Activated CD8-positive, alpha-beta T cell treated with anti-CD3 and anti-CD28 coated beads, Interleukin-2, amount 10 ng/mL, durations not matched to agents 7 days and 5 days (primary cell): ENCODE measurements at regions of chr3 and their contacts with region 1.

Region 1: DNA sequence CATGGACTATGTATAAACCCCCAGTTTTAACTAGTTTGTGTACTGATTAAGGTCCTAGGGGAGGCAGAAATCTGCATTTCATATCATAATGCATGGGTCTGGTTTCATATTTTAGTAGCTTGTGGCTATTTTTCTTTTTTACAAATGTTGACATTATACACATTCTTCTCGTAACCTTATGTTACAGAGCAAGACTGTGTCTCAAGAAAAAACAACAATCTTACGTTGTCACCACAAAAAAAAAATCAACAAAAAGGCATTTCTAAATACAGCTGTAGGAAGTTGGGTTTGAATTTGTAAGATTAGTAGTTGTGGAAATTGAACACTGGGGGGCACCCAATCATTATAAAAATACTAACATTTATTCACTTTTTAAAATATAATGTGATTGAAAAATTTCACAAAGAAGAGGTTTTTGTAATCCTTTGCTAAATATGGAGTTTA is 17.9 kb downstream of the SERP1 start:
- DNase-seq: no peak
- ATAC-seq: no peak
- H3K4me3 Mint-ChIP-seq: no peak overlapping the region
- H3K27ac Mint-ChIP-seq: no peak overlapping the region
- H3K4me1 Mint-ChIP-seq: peaks cover 5% of the 10 kb centered on the region
- H3K27me3 Mint-ChIP-seq: peaks cover 4% of the 10 kb centered on the region

Region 2: GRCh38 chr3:150870396-150870795 is 342.0 kb after region 1 on chr3:
- CTCF ChIA-PET with region 1: interaction called, 11 read pairs
- POLR2A ChIA-PET with region 1: no interaction called
- DNase-seq: no peak
- ATAC-seq: no peak
- H3K4me3 Mint-ChIP-seq: no peak overlapping the region
- H3K27ac Mint-ChIP-seq: no peak overlapping the region
- H3K4me1 Mint-ChIP-seq: peaks cover under 1% of the 10 kb centered on the region
- H3K27me3 Mint-ChIP-seq: peaks cover 14% of the 10 kb centered on the region